MCF 10A (cell line): ENCODE measurements at regions of chr7 and their contacts with region 1.

Region 1: DNA sequence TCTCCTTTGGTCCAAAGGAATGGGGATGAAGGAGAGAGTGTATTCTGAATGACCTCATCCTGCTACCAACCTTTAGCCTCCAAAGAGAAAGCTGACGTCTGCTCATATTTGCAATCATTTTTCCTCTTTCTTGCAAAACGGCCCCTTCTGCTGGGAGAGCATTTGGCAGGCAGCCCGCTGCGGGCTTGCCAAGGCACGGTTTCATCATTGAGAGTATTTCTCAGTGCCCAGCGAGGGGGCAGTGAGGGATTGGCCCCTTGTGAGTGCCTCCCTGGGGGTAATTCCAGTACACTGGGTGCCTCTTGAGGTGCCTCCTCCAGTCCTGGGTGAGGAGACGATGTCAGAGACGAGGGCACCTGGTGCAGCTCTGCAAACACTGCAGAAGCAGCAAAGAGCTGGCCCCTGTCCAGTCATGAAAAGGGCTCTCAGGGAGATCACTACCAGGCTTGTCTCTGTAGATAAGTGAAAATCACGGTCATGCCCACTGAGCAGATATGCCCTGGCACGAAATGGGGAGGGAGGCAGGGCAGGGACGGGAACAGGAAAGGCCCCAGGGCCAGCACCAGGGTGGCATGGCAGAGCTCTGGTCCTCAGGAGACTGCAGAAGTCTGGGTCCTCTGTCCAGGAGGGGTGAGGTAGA is 48.7 kb upstream of the SHH start:
- DNase-seq: peak; percentile 98
- H3K4me3 Mint-ChIP-seq: peak overlapping the region; percentile 45
- H3K27ac Mint-ChIP-seq: peak overlapping the region; percentile 62
- H3K4me1 Mint-ChIP-seq: no peaks in the 10 kb centered on the region
- H3K27me3 Mint-ChIP-seq: peaks cover 6% of the 10 kb centered on the region
- CTCF ChIP-seq: no peak

Region 2: GRCh38 chr7:155694851-155695250 is 166.1 kb before region 1 on chr7:
- CTCF ChIA-PET with region 1: no interaction called
- POLR2A ChIA-PET with region 1: no interaction called
- intact Hi-C with region 1: no loop called
- DNase-seq: peak; percentile 14
- H3K4me3 Mint-ChIP-seq: no peak overlapping the region
- H3K27ac Mint-ChIP-seq: no peak overlapping the region
- H3K4me1 Mint-ChIP-seq: peaks cover 14% of the 10 kb centered on the region
- H3K27me3 Mint-ChIP-seq: no peaks in the 10 kb centered on the region
- CTCF ChIP-seq: no peak

Region 3: DNA sequence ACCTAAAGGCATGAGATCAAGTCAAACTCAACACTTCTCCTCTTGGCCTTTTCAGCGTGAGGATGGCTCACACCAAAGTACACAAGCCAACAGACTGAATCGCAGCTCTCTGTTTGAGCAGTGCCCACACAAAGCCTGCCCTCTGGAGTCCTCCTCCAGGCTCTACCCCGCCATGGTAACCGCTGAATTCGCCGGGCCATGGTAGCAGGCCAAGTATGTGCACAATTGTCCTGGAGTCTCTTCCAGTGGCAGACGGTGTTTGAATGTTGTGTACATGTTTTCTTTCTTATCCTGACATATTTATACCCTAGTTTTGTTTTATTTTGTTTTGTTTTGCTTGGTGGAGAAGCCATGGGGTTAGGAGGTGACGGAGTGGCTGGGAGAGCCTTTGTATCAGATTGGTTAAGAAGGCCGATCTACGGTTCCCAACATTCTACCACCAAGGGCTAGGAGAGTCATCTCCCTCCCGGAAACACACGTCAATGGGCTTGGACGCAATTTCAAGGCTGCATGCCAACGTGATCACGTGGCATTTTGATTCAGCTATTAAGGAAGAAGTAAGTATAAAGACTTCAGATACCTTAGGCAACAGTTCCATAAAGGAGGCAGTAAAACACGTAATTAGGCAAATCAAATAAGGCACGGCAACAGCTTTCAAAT is 36.6 kb before region 1 on chr7:
- CTCF ChIA-PET with region 1: no interaction called
- POLR2A ChIA-PET with region 1: interaction called, 5 read pairs
- intact Hi-C with region 1: loop called (anchors 5 kb)
- DNase-seq: peak; percentile 95
- H3K4me3 Mint-ChIP-seq: no peak overlapping the region
- H3K27ac Mint-ChIP-seq: no peak overlapping the region
- H3K4me1 Mint-ChIP-seq: peaks cover 15% of the 10 kb centered on the region
- H3K27me3 Mint-ChIP-seq: no peaks in the 10 kb centered on the region
- CTCF ChIP-seq: no peak

Region 4: DNA sequence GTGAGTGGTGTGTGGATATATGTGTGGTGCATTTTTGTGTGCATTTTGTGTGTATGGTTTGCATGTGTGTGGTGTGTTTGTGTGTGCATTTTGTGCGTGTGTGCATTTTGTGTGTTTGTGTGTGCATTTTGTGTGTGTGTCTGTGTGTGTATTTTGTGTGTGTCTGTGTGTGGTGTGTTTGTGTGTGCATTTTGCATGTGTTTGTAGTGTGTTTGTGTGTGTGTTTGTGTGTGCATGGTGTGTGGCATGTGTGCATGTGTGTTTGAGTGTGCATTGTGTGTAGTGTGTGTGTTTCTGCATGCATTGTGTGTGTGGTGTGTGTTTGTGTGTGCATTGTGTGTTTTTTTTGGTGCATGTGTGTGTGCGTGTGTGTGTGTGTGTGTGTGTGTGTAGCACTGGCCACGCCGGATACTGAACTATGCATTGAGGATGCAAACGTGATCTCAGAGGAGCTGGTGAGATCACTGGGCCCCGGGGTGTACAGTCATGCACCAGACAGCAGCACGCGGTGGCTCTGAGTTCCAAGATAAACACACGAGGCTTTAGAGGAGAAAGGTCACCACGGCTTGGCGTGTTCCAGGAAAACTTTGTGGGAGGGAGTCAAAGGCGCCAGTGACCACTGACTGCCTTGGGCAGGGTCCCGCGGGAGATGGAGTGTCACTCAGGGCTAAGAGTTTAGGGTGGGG is 57.9 kb after region 1 on chr7:
- CTCF ChIA-PET with region 1: interaction called, 6 read pairs
- POLR2A ChIA-PET with region 1: interaction called, 8 read pairs
- intact Hi-C with region 1: loop called (anchors 2 kb)
- DNase-seq: peak; percentile 96
- H3K4me3 Mint-ChIP-seq: no peak overlapping the region
- H3K27ac Mint-ChIP-seq: peak overlapping the region; percentile 75
- H3K4me1 Mint-ChIP-seq: peaks cover 31% of the 10 kb centered on the region
- H3K27me3 Mint-ChIP-seq: no peaks in the 10 kb centered on the region
- CTCF ChIP-seq: no peak

Region 5: GRCh38 chr7:156257904-156258303 is 396.9 kb after region 1 on chr7:
- CTCF ChIA-PET with region 1: no interaction called
- POLR2A ChIA-PET with region 1: no interaction called
- intact Hi-C with region 1: no loop called
- DNase-seq: peak; percentile 13
- H3K4me3 Mint-ChIP-seq: no peak overlapping the region
- H3K27ac Mint-ChIP-seq: no peak overlapping the region
- H3K4me1 Mint-ChIP-seq: no peaks in the 10 kb centered on the region
- H3K27me3 Mint-ChIP-seq: peaks cover 19% of the 10 kb centered on the region
- CTCF ChIP-seq: no peak